Colonic mucosa (tissue), 4 donors: ENCODE measurements at regions of chr7 and their contacts with region 1.

Region 1: DNA sequence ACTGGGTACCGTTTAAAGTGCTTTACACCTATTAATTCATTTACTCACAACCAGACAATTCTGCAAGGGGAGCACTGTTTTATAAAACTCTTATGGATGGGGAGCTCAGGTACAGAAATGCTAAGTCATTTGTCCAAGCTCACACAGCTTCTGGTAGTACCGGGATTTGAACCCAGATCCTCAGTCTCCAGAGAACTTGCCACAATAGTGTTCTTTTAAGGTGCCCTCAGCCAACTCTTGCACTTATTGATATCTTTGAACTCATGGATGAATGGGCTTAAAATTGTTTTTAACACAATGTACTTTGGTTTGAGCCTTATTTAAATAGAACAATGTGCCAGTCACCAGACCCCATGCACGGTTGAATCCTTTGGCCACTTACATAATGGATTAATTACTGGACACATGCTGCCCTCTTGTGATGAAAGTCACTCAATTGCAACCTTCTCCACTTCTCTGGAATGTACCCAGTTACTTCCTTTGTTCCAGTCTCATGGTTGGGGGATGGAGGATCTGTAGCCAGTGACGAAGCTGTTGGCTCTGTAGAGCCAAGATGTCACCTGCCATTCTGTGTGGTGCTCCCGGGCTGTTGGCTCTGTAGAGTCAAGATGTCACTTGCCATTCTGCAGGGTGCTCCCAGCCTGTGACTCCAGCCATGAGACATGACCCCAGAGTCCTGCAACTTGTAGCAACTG is 65.6 kb downstream of the NOD1 start:
- DNase-seq: no peak
- H3K4me3 ChIP-seq: no peak overlapping the region
- H3K27ac ChIP-seq: no peak overlapping the region
- H3K4me1 ChIP-seq: no peaks in the 10 kb centered on the region
- H3K27me3 ChIP-seq: no peaks in the 10 kb centered on the region
- CTCF ChIP-seq: peak; percentile 35

Region 2: DNA sequence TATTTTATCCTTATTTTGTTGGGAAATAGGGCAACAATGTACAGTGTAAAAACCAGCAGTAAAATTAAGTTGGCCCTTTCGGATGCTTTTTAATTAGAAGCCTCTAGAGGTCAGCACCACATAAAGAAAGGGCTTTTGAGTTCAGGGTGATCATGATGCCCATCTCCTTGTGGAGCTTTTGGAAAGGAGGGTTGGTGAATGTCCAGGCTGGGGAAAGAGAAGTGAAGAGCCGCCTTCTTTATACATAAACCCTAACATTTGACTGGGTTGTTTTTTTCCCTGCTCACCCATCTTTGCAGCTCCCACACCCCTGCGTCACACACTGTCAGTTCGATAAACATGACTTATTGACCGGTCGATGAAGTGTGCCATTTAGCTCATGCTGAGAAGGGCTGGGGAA is 248.4 kb before region 1 on chr7:
- intact Hi-C with region 1: loop called (anchors 5 kb)
- DNase-seq: no peak
- H3K4me3 ChIP-seq: no peak overlapping the region
- H3K27ac ChIP-seq: no peak overlapping the region
- H3K4me1 ChIP-seq: no peaks in the 10 kb centered on the region
- H3K27me3 ChIP-seq: no peaks in the 10 kb centered on the region
- CTCF ChIP-seq: peak; percentile 49

Region 3: DNA sequence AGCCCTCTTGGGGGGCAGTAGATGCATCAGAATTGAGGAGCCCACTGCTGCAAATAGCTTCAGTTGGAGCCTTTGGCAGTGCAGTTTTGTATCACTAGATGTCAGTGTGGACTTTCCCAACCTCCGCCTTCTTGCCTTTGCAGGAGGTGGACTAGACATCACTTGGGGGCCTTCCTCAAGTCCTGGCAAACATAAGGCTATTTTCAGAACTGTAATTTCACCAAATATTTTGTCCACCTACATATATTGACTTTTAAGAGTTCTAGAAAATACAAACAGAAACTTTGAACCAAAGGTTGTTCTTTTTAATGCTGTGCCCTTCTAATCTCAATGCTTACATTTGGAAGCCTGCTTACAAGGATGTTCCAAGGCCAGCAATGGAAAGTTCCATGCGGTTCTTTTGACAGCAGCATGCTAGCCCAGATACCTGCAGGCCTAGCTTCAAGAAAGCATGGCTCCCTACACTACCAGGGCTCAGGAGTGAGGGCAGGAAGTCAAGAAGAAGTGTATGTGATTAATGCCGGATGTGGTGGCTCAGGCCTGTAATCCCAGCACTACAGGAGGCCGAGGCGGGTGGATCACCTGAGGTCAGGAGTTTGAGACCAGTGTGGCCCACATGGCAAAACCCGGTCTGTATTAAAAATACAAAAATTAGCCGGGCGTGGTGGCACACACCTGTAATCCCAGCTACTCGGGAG is 136.6 kb before region 1 on chr7:
- intact Hi-C with region 1: loop called (anchors 5 kb)
- DNase-seq: no peak
- H3K4me3 ChIP-seq: no peak overlapping the region
- H3K27ac ChIP-seq: no peak overlapping the region
- H3K4me1 ChIP-seq: peaks cover 4% of the 10 kb centered on the region
- H3K27me3 ChIP-seq: no peaks in the 10 kb centered on the region
- CTCF ChIP-seq: peak; percentile 52

Region 4: DNA sequence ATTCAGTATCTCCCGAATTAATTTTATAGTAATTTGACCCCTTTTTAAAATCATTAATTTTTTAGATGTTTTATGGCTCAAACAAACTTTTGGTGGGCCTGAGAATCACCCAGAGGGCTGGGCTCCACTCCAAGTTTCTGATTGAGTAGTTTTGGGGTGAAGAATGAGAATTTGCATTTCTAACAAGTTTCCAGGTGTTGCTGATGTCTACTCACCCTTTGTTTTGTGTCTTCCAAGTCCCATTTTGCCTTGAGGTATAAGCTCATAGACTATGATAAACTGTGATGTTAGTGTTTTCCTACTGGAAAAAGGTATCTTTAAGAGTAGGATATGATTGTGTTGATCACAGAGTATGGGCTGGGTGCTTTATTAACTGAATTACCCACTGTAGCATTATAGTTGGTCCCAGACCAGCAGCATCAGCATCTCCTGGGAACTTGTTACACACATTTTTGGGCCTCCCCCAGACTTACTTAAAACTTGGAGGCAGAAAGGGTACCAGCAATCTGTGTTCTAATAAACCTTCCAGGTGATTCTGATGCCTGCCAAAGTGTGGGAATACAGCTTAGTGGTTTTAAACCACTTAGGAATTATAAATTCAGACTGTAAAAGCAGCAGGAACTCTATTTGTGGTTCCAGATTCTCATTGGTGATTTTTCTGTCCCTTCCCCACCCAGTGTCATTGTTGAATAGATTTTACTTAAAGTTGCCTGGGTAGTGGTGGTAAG is 109.5 kb before region 1 on chr7:
- intact Hi-C with region 1: no loop called
- DNase-seq: no peak
- H3K4me3 ChIP-seq: no peak overlapping the region
- H3K27ac ChIP-seq: peak overlapping the region; percentile 43
- H3K4me1 ChIP-seq: peaks cover 8% of the 10 kb centered on the region
- H3K27me3 ChIP-seq: no peaks in the 10 kb centered on the region
- CTCF ChIP-seq: no peak

Region 5: GRCh38 chr7:30396389-30396788 is 16.6 kb before region 1 on chr7:
- intact Hi-C with region 1: no loop called
- DNase-seq: no peak
- H3K4me3 ChIP-seq: no peak overlapping the region
- H3K27ac ChIP-seq: no peak overlapping the region
- H3K4me1 ChIP-seq: no peaks in the 10 kb centered on the region
- H3K27me3 ChIP-seq: no peaks in the 10 kb centered on the region
- CTCF ChIP-seq: no peak

Region 6: GRCh38 chr7:30869794-30870611 is 457.0 kb after region 1 on chr7:
- intact Hi-C with region 1: no loop called
- DNase-seq: no peak
- H3K4me3 ChIP-seq: no peak overlapping the region
- H3K27ac ChIP-seq: no peak overlapping the region
- H3K4me1 ChIP-seq: no peaks in the 10 kb centered on the region
- H3K27me3 ChIP-seq: no peaks in the 10 kb centered on the region
- CTCF ChIP-seq: no peak